H1 (cell line): ENCODE measurements at regions of chr4 and their contacts with region 1.

Region 1: DNA sequence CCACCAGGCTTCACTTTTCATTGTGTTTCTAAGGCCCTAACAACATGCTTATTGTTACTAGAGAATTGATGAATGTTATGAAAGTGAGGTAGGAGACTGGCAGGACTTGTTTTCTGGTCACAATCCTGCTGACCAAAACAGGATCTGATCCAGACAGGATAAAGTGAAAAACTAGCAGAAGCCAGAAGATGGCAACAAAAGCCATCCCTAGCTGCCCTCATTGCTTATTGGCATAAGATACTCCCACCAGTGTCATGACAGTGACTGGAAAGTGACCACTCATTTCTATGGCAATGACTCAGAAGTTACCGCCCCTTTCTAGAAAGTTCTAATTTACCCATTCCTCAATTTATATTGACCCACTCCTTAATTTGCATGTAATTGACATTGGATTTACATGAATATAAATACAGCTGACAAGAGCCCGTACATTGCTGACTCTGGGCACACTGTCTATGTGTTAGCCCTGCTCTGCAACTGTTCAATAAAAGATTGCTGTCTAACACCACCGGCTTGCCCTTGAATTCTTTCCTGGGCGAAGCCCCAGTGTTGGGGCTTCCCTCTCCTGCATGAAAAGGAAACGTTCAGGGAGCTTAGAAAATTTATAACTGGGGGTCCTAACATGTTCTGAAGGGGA is 30.0 kb upstream of the FGG start:
- DNase-seq: no peak
- H3K4me3 ChIP-seq: no peak overlapping the region
- H3K27ac ChIP-seq: no peak overlapping the region
- H3K4me1 ChIP-seq: no peaks in the 10 kb centered on the region
- H3K27me3 ChIP-seq: no peaks in the 10 kb centered on the region
- CTCF ChIP-seq: peak in 2 of 3 experiments; percentile 22 to 36; a peak in 2 of 4 replicates
- EP300 ChIP-seq: no peak
- POLR2A ChIP-seq: no peak
- RAD21 ChIP-seq: peak; percentile 61 to 67

Region 2: GRCh38 chr4:154551872-154552686 is 90.4 kb before region 1 on chr4:
- CTCF ChIA-PET with region 1: interaction called, 10 read pairs
- POLR2A ChIA-PET with region 1: no interaction called
- DNase-seq: peak in 1 of 2 experiments; percentile 54
- H3K4me3 ChIP-seq: no peak overlapping the region
- H3K27ac ChIP-seq: no peak overlapping the region
- H3K4me1 ChIP-seq: no peaks in the 10 kb centered on the region; a peak in 1 of 7 replicates
- H3K27me3 ChIP-seq: no peaks in the 10 kb centered on the region; a peak in 1 of 7 replicates
- CTCF ChIP-seq: peak; percentile 69 to 76 (median 69)
- EP300 ChIP-seq: no peak
- POLR2A ChIP-seq: no peak
- RAD21 ChIP-seq: peak; percentile 86 to 87

Region 3: GRCh38 chr4:154590329-154591006 is 52.0 kb before region 1 on chr4 and contains the start of gene FGA:
- CTCF ChIA-PET with region 1: no interaction called
- POLR2A ChIA-PET with region 1: no interaction called
- DNase-seq: no peak
- H3K4me3 ChIP-seq: no peak within 1 kb of the TSS
- H3K27ac ChIP-seq: no peak within 1 kb of the TSS
- H3K4me1 ChIP-seq: 0 out of 7 replicates have a peak, but pooled peaks cover 0 to 3% (median 0%) of the 10 kb centered on the region in 4 experiments
- H3K27me3 ChIP-seq: no peaks in the 10 kb centered on the region
- CTCF ChIP-seq: no peak
- EP300 ChIP-seq: no peak
- POLR2A ChIP-seq: no peak
- RAD21 ChIP-seq: no peak
- total RNA-seq, gene FGA: not detected in 2 replicates

Region 4: GRCh38 chr4:154612472-154613414 is 29.7 kb before region 1 on chr4 and contains the start of gene FGG:
- CTCF ChIA-PET with region 1: interaction called, 10 read pairs
- POLR2A ChIA-PET with region 1: no interaction called
- DNase-seq: no peak
- H3K4me3 ChIP-seq: no peak within 1 kb of the TSS
- H3K27ac ChIP-seq: no peak within 1 kb of the TSS
- H3K4me1 ChIP-seq: no peaks in the 10 kb centered on the region
- H3K27me3 ChIP-seq: peaks cover 0 to 1% (median 0%) of the 10 kb centered on the region in 4 experiments; a peak in 1 of 7 replicates
- CTCF ChIP-seq: no peak
- EP300 ChIP-seq: no peak
- POLR2A ChIP-seq: no peak
- RAD21 ChIP-seq: no peak
- total RNA-seq, gene FGG: not detected in 2 replicates

Region 5: GRCh38 chr4:154626793-154627484 is 15.6 kb before region 1 on chr4:
- CTCF ChIA-PET with region 1: interaction called, 87 read pairs
- POLR2A ChIA-PET with region 1: no interaction called
- DNase-seq: peak; percentile 62 to 80
- H3K4me3 ChIP-seq: peak overlapping the region; percentile 49 to 69 (median 50)
- H3K27ac ChIP-seq: no peak overlapping the region
- H3K4me1 ChIP-seq: peaks cover 0 to 6% (median 1%) of the 10 kb centered on the region in 4 experiments; a peak in 2 of 7 replicates
- H3K27me3 ChIP-seq: peaks cover 1 to 22% (median 11%) of the 10 kb centered on the region in 4 experiments
- CTCF ChIP-seq: peak; percentile 66 to 96 (median 71)
- EP300 ChIP-seq: no peak
- POLR2A ChIP-seq: no peak
- RAD21 ChIP-seq: peak; percentile 60 to 68

Region 6: GRCh38 chr4:154743683-154744340 is 101.3 kb after region 1 on chr4 and contains the start of gene LRAT:
- CTCF ChIA-PET with region 1: interaction called, 12 read pairs
- POLR2A ChIA-PET with region 1: interaction called, 6 read pairs
- DNase-seq: peak; percentile 80 to 91
- H3K4me3 ChIP-seq: peak within 1 kb of the TSS; percentile 70 to 89 (median 82)
- H3K27ac ChIP-seq: peak within 1 kb of the TSS; percentile 26; the same call in 1 of the 2 replicates
- H3K4me1 ChIP-seq: peaks cover 9 to 24% (median 19%) of the 10 kb centered on the region in 4 experiments
- H3K27me3 ChIP-seq: peaks cover 0 to 33% (median 26%) of the 10 kb centered on the region in 4 experiments; a peak in 6 of 7 replicates
- CTCF ChIP-seq: peak; percentile 42 to 69 (median 54)
- EP300 ChIP-seq: no peak
- POLR2A ChIP-seq: peak; percentile 67 to 91
- RAD21 ChIP-seq: peak; percentile 0 to 22; a peak in 2 of 4 replicates
- total RNA-seq, gene LRAT: 10.3 and 10.6 TPM in 2 replicates

Region 7: DNA sequence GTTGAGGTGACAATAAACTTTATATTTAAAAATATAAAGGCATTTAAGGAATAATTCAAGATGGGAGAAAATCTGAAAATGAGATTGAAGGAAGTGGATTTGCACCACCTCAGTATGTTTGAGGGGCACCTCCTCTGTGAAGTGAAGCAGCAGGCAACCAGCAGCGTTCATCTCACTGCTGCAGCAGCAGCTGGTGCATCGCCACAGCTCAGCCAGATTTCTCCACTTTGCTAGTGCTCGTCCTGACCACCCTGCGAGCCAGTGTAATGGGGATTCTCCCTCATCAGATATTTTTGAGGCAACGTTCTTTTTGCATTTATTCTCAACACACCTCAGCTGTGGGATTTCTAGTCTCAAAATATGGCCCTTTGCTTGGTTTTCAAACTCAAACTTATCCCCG is 115.2 kb after region 1 on chr4:
- CTCF ChIA-PET with region 1: interaction called, 11 read pairs
- POLR2A ChIA-PET with region 1: no interaction called
- DNase-seq: no peak
- H3K4me3 ChIP-seq: no peak overlapping the region
- H3K27ac ChIP-seq: no peak overlapping the region
- H3K4me1 ChIP-seq: no peaks in the 10 kb centered on the region
- H3K27me3 ChIP-seq: no peaks in the 10 kb centered on the region
- CTCF ChIP-seq: no peak
- EP300 ChIP-seq: no peak
- POLR2A ChIP-seq: no peak
- RAD21 ChIP-seq: no peak

Region 8: GRCh38 chr4:154779362-154779947 is 137.0 kb after region 1 on chr4:
- CTCF ChIA-PET with region 1: interaction called, 89 read pairs
- POLR2A ChIA-PET with region 1: no interaction called
- DNase-seq: no peak
- H3K4me3 ChIP-seq: no peak overlapping the region
- H3K27ac ChIP-seq: no peak overlapping the region
- H3K4me1 ChIP-seq: no peaks in the 10 kb centered on the region
- H3K27me3 ChIP-seq: no peaks in the 10 kb centered on the region
- CTCF ChIP-seq: peak in 2 of 3 experiments; percentile 58; a peak in 2 of 4 replicates
- EP300 ChIP-seq: no peak
- POLR2A ChIP-seq: no peak
- RAD21 ChIP-seq: peak; percentile 73 to 74